ENCODE measurements at regions of chr22 and their contacts with region 1.

Region 1: DNA sequence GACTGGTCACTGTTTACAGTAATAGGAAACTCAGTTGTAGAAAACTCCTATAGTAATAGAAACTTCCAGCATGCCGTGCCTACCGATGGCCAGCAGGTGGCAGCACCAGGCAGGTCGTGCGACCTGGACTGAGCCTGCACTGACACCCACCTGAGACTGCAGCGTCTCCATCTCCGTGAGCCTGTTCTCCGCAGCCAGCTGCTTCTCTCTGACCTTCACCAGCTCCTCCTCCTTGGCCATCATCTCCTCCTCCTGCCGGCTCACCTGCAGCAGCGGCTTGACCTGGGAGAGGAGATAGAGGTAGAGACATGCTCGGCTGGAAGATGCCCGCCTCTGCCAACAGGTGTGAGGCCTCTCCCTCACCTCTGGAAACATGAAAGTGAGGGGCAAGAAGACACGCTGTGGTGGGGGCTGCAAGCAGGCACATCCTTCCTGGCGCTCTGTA is 48.5 kb downstream of the APOL1 start:
- DNase-seq: peak; percentile 88

Region 2: DNA sequence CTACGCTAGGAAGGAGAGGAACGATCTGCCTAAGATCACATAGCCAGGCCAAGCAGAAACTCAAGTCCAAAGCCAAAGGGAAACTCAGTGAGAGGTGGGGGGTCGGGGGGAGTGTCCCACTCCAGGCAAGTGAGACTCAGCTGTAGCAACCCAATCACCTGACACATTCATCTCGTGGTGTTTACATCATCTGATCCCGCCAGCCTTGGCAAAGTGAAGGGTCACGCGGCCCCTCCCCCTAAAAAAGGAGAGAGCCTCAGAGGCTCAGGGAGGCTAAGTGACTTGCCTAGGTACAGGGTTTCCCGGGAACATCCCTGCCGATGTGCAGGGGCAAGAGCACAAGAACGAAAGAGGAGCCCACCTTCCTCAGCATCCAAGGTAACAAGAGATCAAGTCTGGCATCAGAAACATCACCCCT is 64.9 kb after region 1 on chr22:
- CTCF ChIA-PET with region 1: no interaction called
- POLR2A ChIA-PET with region 1: no interaction called
- DNase-seq: no peak

Region 3: DNA sequence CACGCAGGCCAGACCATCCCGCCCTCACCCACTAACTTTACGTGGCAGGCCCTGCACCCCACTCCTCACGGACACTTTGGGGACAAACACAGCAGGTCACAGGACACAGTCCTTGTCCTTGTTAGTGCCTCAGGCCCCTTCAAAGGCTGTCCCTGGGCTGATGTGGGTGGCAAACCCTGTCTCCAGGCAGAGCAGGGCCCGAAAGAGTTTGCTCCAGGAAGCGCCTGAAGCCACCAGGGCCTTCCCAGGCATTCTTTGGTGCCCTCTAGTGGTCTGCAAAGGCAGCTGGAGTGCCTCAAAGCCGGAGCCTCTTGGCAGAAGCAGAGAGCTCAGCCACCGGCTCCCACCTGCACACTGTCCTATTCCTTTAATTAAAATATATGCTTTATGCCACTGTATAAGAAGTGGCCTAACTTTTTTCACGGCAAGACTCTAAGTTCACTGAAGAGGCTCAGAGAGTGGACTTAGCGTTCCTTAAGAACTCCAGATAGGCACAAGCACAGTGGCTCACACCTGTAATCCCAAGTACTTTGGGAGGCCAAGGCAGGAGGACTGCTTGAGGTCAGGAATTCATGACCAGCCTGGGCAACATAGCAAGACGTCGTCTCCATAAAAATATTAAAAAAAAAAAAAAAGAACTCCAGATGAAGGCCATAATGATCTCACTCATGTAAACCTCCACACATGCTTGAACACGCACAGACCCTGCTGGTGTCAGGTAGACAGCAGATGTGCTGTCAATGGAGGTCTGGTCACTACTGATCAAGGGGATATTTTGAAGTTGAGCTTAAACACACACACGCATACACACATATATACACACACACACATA is 169.0 kb after region 1 on chr22:
- CTCF ChIA-PET with region 1: interaction called, 36 read pairs
- POLR2A ChIA-PET with region 1: interaction called, 6 read pairs
- DNase-seq: peak; percentile 92